Mammary epithelial cell (primary cell): ENCODE measurements at regions of chr16 and their contacts with region 1.

Region 1: GRCh38 chr16:4116337-4117249 is at the start of gene ADCY9:
- DNase-seq: peak; percentile 53
- H3K4me3 ChIP-seq: peak within 1 kb of the TSS; percentile 36 to 63 (median 59)
- H3K27ac ChIP-seq: no peak within 1 kb of the TSS
- H3K4me1 ChIP-seq: peaks cover 20% of the 10 kb centered on the region
- H3K27me3 ChIP-seq: no peaks in the 10 kb centered on the region
- CTCF ChIP-seq: no peak
- total RNA-seq, gene ADCY9: 18.4 to 27.3 TPM

Region 2: GRCh38 chr16:3983081-3983520 is 133.5 kb before region 1 on chr16:
- CTCF ChIA-PET with region 1: interaction called, 3 read pairs
- dilution Hi-C with region 1: no loop called
- in situ Hi-C with region 1: no loop called
- intact Hi-C with region 1: loop called (anchors 1 kb)
- DNase-seq: peak; percentile 58
- H3K4me3 ChIP-seq: no peak overlapping the region
- H3K27ac ChIP-seq: no peak overlapping the region
- H3K4me1 ChIP-seq: peaks cover 7% of the 10 kb centered on the region
- H3K27me3 ChIP-seq: no peaks in the 10 kb centered on the region
- CTCF ChIP-seq: peak; percentile 73 to 93

Region 3: GRCh38 chr16:4053301-4053845 is 63.2 kb before region 1 on chr16:
- CTCF ChIA-PET with region 1: no interaction called
- dilution Hi-C with region 1: loop called (anchors 5 kb)
- in situ Hi-C with region 1: no loop called
- intact Hi-C with region 1: loop called (anchors 5 kb)
- DNase-seq: peak; percentile 50
- H3K4me3 ChIP-seq: peak overlapping the region in 1 of 3 experiments; percentile 2
- H3K27ac ChIP-seq: peak overlapping the region; percentile 56
- H3K4me1 ChIP-seq: peaks cover 31% of the 10 kb centered on the region
- H3K27me3 ChIP-seq: no peaks in the 10 kb centered on the region
- CTCF ChIP-seq: no peak

Region 4: DNA sequence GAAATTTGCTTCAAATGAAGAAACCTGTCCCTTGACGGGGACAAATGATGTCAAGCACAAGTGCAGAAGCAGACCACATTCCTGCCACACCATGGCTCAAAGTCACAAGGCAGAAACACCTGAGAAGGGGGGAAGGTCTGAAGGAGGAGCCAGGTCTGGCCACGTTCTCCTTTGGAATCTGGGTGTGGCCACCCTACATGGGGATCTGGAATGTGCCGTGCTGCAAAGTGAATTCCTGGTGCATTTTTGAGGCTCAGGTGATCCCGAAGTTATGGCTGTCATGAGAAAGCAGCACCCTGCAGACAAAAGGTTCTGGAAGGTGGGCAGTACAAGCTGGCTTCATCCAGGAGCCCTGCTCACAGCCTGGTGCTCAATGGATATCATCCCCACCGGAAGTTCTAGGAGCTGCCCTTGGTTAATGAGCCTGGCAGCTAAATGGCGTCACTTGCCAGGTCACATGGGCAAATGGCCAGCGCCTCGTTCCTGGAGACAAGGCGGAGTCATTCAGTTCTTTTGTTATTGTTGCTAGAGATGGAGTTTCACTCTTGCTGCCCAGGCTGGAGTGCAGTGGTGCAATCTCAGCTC is 19.7 kb after region 1 on chr16:
- CTCF ChIA-PET with region 1: no interaction called
- dilution Hi-C with region 1: no loop called
- in situ Hi-C with region 1: no loop called
- intact Hi-C with region 1: loop called (anchors 2 kb)
- DNase-seq: peak; percentile 90
- H3K4me3 ChIP-seq: no peak overlapping the region
- H3K27ac ChIP-seq: peak overlapping the region; percentile 82
- H3K4me1 ChIP-seq: peaks cover 27% of the 10 kb centered on the region
- H3K27me3 ChIP-seq: no peaks in the 10 kb centered on the region
- CTCF ChIP-seq: peak; percentile 26 to 48

Region 5: GRCh38 chr16:4159726-4160125 is 43.1 kb after region 1 on chr16:
- CTCF ChIA-PET with region 1: no interaction called
- dilution Hi-C with region 1: no loop called
- in situ Hi-C with region 1: no loop called
- intact Hi-C with region 1: no loop called
- DNase-seq: no peak
- H3K4me3 ChIP-seq: no peak overlapping the region
- H3K27ac ChIP-seq: no peak overlapping the region
- H3K4me1 ChIP-seq: no peaks in the 10 kb centered on the region
- H3K27me3 ChIP-seq: no peaks in the 10 kb centered on the region
- CTCF ChIP-seq: no peak

Region 6: GRCh38 chr16:4183237-4184036 is 66.8 kb after region 1 on chr16:
- CTCF ChIA-PET with region 1: no interaction called
- dilution Hi-C with region 1: no loop called
- in situ Hi-C with region 1: no loop called
- intact Hi-C with region 1: loop called (anchors 2 kb)
- DNase-seq: peak; percentile 92
- H3K4me3 ChIP-seq: peak overlapping the region; percentile 72 to 78 (median 73)
- H3K27ac ChIP-seq: peak overlapping the region; percentile 84
- H3K4me1 ChIP-seq: peaks cover 13% of the 10 kb centered on the region
- H3K27me3 ChIP-seq: no peaks in the 10 kb centered on the region
- CTCF ChIP-seq: no peak

Region 7: GRCh38 chr16:4232541-4233386 is 116.2 kb after region 1 on chr16:
- CTCF ChIA-PET with region 1: no interaction called
- dilution Hi-C with region 1: no loop called
- in situ Hi-C with region 1: no loop called
- intact Hi-C with region 1: no loop called
- DNase-seq: peak; percentile 6
- H3K4me3 ChIP-seq: no peak overlapping the region
- H3K27ac ChIP-seq: no peak overlapping the region
- H3K4me1 ChIP-seq: no peaks in the 10 kb centered on the region
- H3K27me3 ChIP-seq: peaks cover 5% of the 10 kb centered on the region
- CTCF ChIP-seq: no peak

Region 8: GRCh38 chr16:4330277-4330874 is 213.8 kb after region 1 on chr16:
- CTCF ChIA-PET with region 1: no interaction called
- dilution Hi-C with region 1: no loop called
- in situ Hi-C with region 1: no loop called
- intact Hi-C with region 1: loop called (anchors 5 kb)
- DNase-seq: peak; percentile 32
- H3K4me3 ChIP-seq: no peak overlapping the region
- H3K27ac ChIP-seq: no peak overlapping the region
- H3K4me1 ChIP-seq: peaks cover 10% of the 10 kb centered on the region
- H3K27me3 ChIP-seq: no peaks in the 10 kb centered on the region
- CTCF ChIP-seq: peak; percentile 79 to 95